ENCODE measurements at regions of chr5 and their contacts with region 1.

Region 1: DNA sequence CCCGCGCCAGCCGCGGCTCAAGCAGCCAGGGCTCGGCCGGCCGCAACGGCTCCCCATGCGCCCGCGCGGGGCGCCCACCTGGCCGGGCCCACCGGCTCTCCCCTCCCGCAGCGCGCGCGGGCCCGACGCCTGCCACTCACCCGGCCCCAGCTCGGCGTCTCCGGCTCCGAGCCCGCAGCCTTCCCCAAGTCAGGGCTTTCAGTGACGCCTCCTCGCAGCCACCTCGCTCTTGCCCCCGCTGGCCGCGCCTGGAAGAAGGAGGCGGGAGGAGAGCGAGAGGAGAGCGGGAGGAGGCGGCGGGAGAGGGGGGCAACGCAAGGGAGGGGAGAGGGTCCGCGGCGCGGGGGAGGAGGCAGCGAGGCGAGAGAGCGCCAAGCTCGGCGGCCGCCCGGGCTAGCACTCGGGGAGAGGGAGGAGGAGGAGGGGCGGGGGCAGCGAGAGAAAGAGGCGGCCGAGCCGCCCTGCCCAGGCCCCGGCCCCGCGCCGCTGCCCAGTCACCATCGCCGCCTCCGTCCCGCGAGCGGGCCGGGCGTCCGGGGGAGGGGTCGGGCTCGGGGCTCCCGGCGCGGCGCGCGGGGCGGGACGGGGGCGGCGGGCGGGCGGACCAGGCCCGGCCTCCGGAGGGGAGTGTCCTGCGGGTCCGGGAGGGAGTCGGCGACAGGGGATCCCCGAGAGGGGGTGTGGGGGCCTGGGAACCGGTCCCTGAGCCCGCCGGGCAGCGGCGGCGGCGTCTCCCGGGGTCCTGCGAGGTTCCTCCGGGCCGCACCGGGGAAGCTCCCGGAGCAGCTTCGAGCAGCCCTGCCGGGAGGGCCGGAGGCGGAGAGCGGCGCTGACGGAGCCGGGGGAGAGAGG is at the start of gene LHFPL2:
- DNase-seq: peak; percentile 77
- H3K4me3 ChIP-seq: peak within 1 kb of the TSS; percentile 38 to 78 (median 62)
- H3K27ac ChIP-seq: peak within 1 kb of the TSS; percentile 82
- H3K4me1 ChIP-seq: peaks cover 19% of the 10 kb centered on the region
- H3K27me3 ChIP-seq: no peaks in the 10 kb centered on the region
- CTCF ChIP-seq: no peak
- POLR2A ChIP-seq: no peak
- total RNA-seq, gene LHFPL2: 26.8 and 36.3 TPM in 2 replicates

Region 2: DNA sequence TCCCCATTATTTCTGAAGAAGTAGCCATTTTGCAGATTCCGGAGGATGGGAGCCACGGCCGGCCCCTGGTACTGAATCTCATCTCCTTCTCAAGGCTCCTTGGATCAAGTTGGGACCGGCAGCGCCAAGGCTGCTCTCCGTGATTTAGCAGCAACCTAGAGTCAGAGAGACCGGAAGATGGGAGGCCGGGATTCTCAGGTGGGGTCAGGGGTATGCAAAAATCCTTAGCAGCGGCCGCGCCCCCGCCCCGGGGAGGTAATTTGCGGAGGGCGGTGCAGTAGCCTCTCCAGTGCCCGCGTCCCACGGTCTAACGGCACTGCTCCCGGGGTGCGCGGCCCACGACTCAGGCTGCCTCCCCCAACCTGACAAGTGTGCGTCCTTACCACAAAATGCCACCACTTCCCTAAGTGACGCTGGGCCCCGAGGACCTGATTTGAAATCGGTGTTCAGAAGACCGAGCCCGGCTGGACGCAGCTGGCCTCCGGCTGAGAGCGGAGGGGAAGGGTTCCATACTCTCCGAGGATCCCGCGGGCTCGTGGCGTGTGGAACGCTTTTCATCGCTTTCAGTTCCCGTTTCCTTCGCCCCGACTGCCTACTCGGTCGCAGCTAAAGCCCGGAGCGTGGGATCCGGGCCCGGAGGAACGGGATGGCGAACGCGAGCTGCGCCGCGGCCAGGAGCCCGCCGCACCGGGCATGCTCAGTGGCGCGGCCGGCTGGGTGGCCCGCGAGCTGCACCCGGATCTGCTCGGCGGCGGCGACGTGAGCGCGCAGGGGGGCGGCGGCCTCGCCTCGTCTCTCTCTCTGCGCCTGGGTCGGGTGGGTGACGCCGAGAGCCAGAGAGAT is 288.5 kb before region 1 on chr5 and contains the start of gene SCAMP1:
- CTCF ChIA-PET with region 1: no interaction called
- POLR2A ChIA-PET with region 1: no interaction called
- dilution Hi-C with region 1: no loop called
- intact Hi-C with region 1: loop called (anchors 5 kb)
- DNase-seq: peak; percentile 95
- H3K4me3 ChIP-seq: peak within 1 kb of the TSS; percentile 72 to 95 (median 75)
- H3K27ac ChIP-seq: peak within 1 kb of the TSS; percentile 65
- H3K4me1 ChIP-seq: peaks cover 14% of the 10 kb centered on the region
- H3K27me3 ChIP-seq: no peaks in the 10 kb centered on the region
- CTCF ChIP-seq: peak; percentile 10 to 28
- POLR2A ChIP-seq: peak; percentile 73
- total RNA-seq, gene SCAMP1: 29.0 and 30.7 TPM in 2 replicates